ENCODE measurements at regions of chr13 and their contacts with region 1.

Region 1: GRCh38 chr13:94660695-94661326 is 51.5 kb downstream of the SOX21 start:
- DNase-seq: no peak
- H3K4me3 Mint-ChIP-seq: no peak overlapping the region
- H3K27ac Mint-ChIP-seq: no peak overlapping the region
- H3K4me1 Mint-ChIP-seq: peaks cover 23% of the 10 kb centered on the region
- H3K27me3 Mint-ChIP-seq: peaks cover 23% of the 10 kb centered on the region

Region 2: DNA sequence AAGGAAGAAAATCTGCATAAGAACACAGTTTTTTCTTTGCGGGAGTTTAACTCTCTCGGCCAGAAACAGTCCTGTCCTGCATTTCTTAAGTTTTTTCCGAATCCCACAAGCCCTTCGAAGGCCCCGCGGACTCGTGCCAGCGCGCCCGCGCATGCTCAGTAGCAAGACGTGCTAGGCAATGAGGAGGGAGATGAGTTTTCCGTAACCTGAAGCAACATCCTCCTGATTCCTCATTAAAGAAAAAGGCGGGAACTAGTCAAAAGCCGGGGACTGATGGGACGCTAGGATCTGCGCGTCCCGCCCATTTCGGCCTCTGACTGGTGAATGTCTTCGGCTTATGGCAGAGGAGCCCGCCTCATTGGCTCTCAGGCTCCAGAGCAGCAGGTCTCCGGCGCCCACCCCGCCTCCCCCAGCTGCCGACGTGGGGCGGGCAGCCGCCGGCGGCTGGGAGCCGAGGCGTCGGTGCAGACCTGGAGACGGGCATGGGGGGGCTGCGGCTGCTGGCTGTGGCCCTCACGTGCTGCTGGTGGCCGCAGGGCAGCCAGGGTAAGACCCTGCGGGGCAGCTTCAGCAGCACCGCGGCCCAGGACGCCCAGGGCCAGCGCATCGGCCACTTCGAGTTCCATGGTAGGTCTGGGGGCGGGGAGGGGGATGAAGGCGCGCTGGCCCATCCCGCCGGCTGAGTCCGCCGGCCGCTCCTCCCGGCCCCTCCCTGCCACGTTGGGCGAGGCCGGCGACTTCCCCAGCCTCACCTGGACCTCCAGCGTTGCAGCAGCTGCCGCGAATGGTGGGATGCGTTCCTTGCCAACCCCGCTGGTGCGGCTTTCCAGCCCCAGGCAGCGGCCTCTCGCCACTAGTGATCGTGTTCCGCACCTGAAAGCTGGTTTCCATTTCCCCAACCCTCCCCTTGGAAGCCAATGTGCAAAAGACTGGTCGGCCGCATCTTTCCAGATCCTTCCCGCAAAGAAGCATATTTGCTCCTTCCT is 59.1 kb before region 1 on chr13 and contains the start of gene GPR180:
- CTCF ChIA-PET with region 1: no interaction called
- POLR2A ChIA-PET with region 1: interaction called, 3 read pairs
- intact Hi-C with region 1: loop called (anchors 5 kb)
- DNase-seq: peak; percentile 95
- H3K4me3 Mint-ChIP-seq: peak within 1 kb of the TSS; percentile 88
- H3K27ac Mint-ChIP-seq: peak within 1 kb of the TSS; percentile 87
- H3K4me1 Mint-ChIP-seq: peaks cover 29% of the 10 kb centered on the region
- H3K27me3 Mint-ChIP-seq: no peaks in the 10 kb centered on the region
- total RNA-seq, gene GPR180: 9.1 to 9.7 TPM

Region 3: GRCh38 chr13:94636942-94637578 is 23.8 kb before region 1 on chr13:
- CTCF ChIA-PET with region 1: no interaction called
- POLR2A ChIA-PET with region 1: no interaction called
- intact Hi-C with region 1: loop called (anchors 1 kb)
- DNase-seq: no peak
- H3K4me3 Mint-ChIP-seq: no peak overlapping the region
- H3K27ac Mint-ChIP-seq: no peak overlapping the region
- H3K4me1 Mint-ChIP-seq: peaks cover 6% of the 10 kb centered on the region
- H3K27me3 Mint-ChIP-seq: no peaks in the 10 kb centered on the region

Region 4: DNA sequence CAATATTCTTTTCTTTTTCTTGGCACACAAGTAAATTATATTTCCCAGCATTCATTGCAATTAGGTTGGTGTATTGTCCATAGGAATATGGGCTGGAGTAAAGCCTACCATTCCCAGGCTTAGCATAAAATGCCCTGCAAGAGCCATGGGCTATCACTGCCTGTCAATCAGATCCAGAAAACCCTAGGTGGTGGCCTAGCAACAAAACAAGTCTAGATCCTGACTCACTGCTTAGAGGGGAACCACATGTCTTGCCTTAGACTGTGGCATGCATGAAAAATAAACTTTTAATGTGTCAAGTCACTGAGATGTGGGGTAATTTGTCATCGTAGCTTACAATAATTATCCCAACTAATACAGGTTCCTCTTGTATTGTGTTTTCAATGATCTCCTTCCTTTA is 35.4 kb after region 1 on chr13:
- CTCF ChIA-PET with region 1: no interaction called
- POLR2A ChIA-PET with region 1: no interaction called
- intact Hi-C with region 1: no loop called
- DNase-seq: no peak
- H3K4me3 Mint-ChIP-seq: no peak overlapping the region
- H3K27ac Mint-ChIP-seq: no peak overlapping the region
- H3K4me1 Mint-ChIP-seq: no peaks in the 10 kb centered on the region
- H3K27me3 Mint-ChIP-seq: peaks cover 33% of the 10 kb centered on the region

Region 5: GRCh38 chr13:94710881-94711560 is 50.2 kb after region 1 on chr13:
- CTCF ChIA-PET with region 1: no interaction called
- POLR2A ChIA-PET with region 1: no interaction called
- intact Hi-C with region 1: loop called (anchors 2 kb)
- DNase-seq: peak; percentile 34
- H3K4me3 Mint-ChIP-seq: peak overlapping the region; percentile 36
- H3K27ac Mint-ChIP-seq: no peak overlapping the region
- H3K4me1 Mint-ChIP-seq: peaks cover 21% of the 10 kb centered on the region
- H3K27me3 Mint-ChIP-seq: peaks cover 72% of the 10 kb centered on the region

Measured in activated CD4-positive, alpha-beta memory T cell treated with anti-CD3 and anti-CD28 coated beads for 36 hours (primary cell).